Activated B cell treated with CpG ODN at 0.5 μM for 24 hours (primary cell): ENCODE measurements at regions of chr19 and their contacts with region 1.

Region 1: DNA sequence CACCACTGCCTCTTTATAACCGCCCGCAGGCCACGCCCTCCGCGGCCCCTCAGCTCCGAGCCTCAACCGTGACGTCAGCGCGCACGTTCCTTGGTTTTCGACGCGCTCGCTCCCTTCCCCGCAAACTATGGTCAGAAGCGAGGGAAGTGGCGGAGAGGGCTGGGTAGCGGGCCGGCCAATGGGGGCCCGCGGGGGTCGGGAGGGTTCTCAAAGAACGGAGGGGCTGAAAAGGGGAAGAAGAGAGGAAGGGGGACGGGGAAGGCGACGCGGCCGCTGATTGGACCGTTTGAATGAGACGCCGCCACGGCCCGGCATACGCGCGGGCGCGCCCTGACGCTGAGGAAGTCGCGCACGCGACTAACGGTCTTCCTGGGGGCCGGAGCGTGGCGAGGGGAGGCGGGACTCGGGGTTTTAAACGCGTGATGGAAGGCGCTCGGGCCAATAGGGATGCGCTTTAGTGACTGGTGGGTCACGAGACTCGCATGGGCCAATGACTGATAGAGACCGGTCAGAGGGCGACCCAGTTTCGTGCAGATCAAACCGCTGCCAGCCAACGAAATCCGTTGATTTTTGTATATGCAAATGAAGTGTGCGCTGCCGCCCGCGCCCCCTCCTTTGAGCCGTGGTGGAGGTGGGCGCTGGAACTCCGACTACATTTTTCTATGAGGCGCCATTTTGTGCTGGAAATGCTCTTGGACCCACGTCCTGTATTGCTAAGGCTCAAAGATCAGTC is 378 bp upstream of the UBE2S start:
- DNase-seq: peak; percentile 95
- ATAC-seq: peak; percentile 88
- H3K4me3 Mint-ChIP-seq: peak overlapping the region; percentile 91
- H3K27ac Mint-ChIP-seq: peak overlapping the region; percentile 98
- H3K4me1 Mint-ChIP-seq: peaks cover 24% of the 10 kb centered on the region
- H3K27me3 Mint-ChIP-seq: no peaks in the 10 kb centered on the region
- CTCF ChIP-seq: no peak

Region 2: DNA sequence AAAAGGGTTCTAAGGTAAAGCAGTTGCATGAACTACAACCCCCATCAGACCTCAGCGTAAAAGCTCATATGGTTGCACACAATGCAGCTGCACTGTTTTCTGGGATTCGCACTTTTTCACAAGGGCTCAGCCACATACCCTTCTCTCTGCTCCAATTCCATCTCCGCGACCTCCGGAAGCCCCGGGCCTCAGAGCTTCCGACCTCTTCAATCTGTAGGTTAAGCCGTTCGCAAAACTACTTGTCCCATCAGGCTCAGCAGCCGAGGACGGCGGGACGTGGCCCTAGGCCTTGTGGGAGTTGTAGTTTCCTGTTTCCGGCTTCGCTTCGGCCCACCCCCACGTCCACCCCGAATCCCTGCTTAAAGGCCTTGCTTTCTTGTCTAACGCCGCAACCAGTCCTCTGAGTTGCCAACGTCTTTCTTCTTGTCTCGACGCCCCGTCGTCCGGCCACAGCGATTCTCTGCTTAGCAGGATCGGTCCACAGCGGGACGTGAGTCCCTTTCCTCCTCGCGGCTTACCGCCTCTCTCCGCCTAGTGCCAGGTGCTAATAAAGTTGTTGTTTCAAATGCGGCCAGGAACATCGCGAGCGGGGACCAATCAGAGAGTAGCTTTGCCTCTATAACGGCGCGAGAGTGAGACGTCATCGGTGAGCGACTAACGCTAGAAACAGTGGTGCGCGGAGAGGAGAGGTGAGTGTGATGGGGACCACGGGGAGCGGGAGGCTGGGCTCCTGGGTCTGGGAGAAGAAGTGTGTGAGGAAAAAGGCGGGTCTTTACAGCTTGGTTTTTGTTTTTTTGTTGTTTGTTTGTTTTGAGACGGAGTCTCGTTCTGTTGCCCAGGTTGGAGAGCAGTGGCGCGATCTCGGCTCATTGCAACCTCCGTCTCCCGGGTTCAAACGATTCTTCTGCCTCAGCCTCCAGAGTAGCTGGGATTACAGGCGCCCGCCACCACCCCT is 1292.6 kb before region 1 on chr19 and contains the starts of genes PRPF31 and TFPT:
- CTCF ChIA-PET with region 1: no interaction called
- POLR2A ChIA-PET with region 1: no interaction called
- intact Hi-C with region 1: loop called (anchors 5 kb)
- DNase-seq: peak; percentile 90
- ATAC-seq: peak; percentile 93
- H3K4me3 Mint-ChIP-seq: peak within 1 kb of the TSS; percentile 94
- H3K27ac Mint-ChIP-seq: peak within 1 kb of the TSS; percentile 98
- H3K4me1 Mint-ChIP-seq: peaks cover 36% of the 10 kb centered on the region
- H3K27me3 Mint-ChIP-seq: no peaks in the 10 kb centered on the region
- CTCF ChIP-seq: no peak
- total RNA-seq, gene PRPF31: 78.9 and 79.3 TPM in 2 replicates
- total RNA-seq, gene TFPT: 16.6 and 17.9 TPM in 2 replicates

Region 3: GRCh38 chr19:55117636-55118391 is 290.2 kb before region 1 on chr19 and contains the start of gene PPP1R12C:
- CTCF ChIA-PET with region 1: no interaction called
- POLR2A ChIA-PET with region 1: interaction called, 16 read pairs
- intact Hi-C with region 1: loop called (anchors 1 kb)
- DNase-seq: peak; percentile 96
- ATAC-seq: peak; percentile 93
- H3K4me3 Mint-ChIP-seq: peak within 1 kb of the TSS; percentile 97
- H3K27ac Mint-ChIP-seq: peak within 1 kb of the TSS; percentile 87
- H3K4me1 Mint-ChIP-seq: peaks cover 55% of the 10 kb centered on the region
- H3K27me3 Mint-ChIP-seq: no peaks in the 10 kb centered on the region
- CTCF ChIP-seq: no peak
- total RNA-seq, gene PPP1R12C: 115 and 139 TPM in 2 replicates

Region 4: GRCh38 chr19:55301459-55302317 is 106.3 kb before region 1 on chr19:
- CTCF ChIA-PET with region 1: no interaction called
- POLR2A ChIA-PET with region 1: interaction called, 26 read pairs
- intact Hi-C with region 1: loop called (anchors 1 kb)
- DNase-seq: peak; percentile 95
- ATAC-seq: peak; percentile 91
- H3K4me3 Mint-ChIP-seq: peak overlapping the region; percentile 75
- H3K27ac Mint-ChIP-seq: peak overlapping the region; percentile 37
- H3K4me1 Mint-ChIP-seq: peaks cover 8% of the 10 kb centered on the region
- H3K27me3 Mint-ChIP-seq: no peaks in the 10 kb centered on the region
- CTCF ChIP-seq: peak; percentile 90

Region 5: DNA sequence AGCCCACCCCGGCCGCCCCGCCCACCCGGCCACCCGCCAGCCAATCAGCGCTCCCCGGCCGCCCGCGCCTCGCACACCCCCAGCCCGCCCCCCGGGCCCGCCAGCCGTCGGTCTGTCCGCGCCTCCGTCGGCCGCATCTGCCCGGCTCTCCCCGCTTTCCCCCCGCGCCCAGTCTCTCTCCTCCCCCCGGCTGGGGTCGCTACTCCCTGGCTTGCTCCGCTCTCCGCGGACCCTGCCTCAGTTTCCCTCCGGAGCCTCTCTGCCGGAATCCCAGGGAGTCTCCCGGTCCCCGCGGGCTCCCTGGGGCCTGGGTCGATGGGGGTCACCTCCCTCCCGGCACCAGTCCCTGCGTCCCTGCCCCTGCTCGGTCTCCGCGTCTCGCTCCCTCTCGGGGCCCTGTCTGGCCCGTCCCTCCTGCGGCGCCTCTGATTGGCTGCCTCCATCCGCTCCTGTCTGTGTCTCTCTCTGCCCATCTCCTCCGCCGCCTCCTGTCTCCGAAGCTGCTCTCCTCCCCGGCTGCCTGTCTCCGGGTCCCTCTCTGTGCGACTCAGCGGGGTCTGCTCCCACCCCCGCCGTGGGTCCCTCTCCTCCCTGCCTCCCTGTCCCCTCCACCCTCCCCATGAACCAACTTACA is 38.2 kb before region 1 on chr19:
- CTCF ChIA-PET with region 1: no interaction called
- POLR2A ChIA-PET with region 1: no interaction called
- intact Hi-C with region 1: no loop called
- DNase-seq: no peak
- ATAC-seq: peak; percentile 47
- H3K4me3 Mint-ChIP-seq: peak overlapping the region; percentile 68
- H3K27ac Mint-ChIP-seq: no peak overlapping the region
- H3K4me1 Mint-ChIP-seq: peaks cover 14% of the 10 kb centered on the region
- H3K27me3 Mint-ChIP-seq: peaks cover 38% of the 10 kb centered on the region
- CTCF ChIP-seq: no peak

Region 6: GRCh38 chr19:55385740-55386529 is 22.0 kb before region 1 on chr19 and contains the start of gene RPL28:
- CTCF ChIA-PET with region 1: interaction called, 3 read pairs
- POLR2A ChIA-PET with region 1: interaction called, 215 read pairs
- intact Hi-C with region 1: loop called (anchors 1 kb)
- DNase-seq: peak; percentile 95
- ATAC-seq: peak; percentile 79
- H3K4me3 Mint-ChIP-seq: peak within 1 kb of the TSS; percentile 100
- H3K27ac Mint-ChIP-seq: peak within 1 kb of the TSS; percentile 99
- H3K4me1 Mint-ChIP-seq: peaks cover 67% of the 10 kb centered on the region
- H3K27me3 Mint-ChIP-seq: no peaks in the 10 kb centered on the region
- CTCF ChIP-seq: no peak
- total RNA-seq, gene RPL28: 3,790 and 4,042 TPM in 2 replicates

Region 7: DNA sequence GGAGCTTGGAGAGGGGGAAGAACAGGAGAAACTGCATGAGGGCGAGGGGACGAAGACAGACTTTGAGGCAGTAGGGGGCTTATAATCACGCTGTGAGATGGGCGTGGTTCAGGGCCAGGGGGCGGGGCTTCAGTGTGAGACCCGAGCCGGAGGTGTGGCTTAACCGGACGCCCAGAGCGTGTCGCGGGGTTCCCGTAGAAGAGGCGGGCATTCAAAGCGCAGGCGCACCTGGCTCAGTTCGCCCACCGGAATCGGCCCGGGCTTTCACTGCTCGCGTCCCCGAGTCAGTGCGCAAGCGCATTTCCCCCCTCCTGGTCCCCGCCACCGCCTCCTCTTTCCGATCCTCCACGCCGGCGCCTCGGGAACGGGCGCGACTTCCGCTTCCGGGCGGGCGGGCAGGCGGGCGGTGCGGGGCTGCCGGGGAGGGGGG is 197.3 kb after region 1 on chr19:
- CTCF ChIA-PET with region 1: no interaction called
- POLR2A ChIA-PET with region 1: interaction called, 5 read pairs
- intact Hi-C with region 1: loop called (anchors 5 kb)
- DNase-seq: peak; percentile 94
- ATAC-seq: peak; percentile 76
- H3K4me3 Mint-ChIP-seq: peak overlapping the region; percentile 93
- H3K27ac Mint-ChIP-seq: peak overlapping the region; percentile 94
- H3K4me1 Mint-ChIP-seq: peaks cover 50% of the 10 kb centered on the region
- H3K27me3 Mint-ChIP-seq: no peaks in the 10 kb centered on the region
- CTCF ChIP-seq: no peak